ENCODE measurements at regions of chr20 and their contacts with region 1.

Region 1: GRCh38 chr20:9699181-9699580 is 139.7 kb downstream of the PAK5 start:
- DNase-seq: no peak
- H3K4me3 ChIP-seq: no peak overlapping the region
- H3K27ac ChIP-seq: peak overlapping the region in 1 of 2 donors; percentile 14
- H3K4me1 ChIP-seq: no peaks in the 10 kb centered on the region
- H3K27me3 ChIP-seq: no peaks in the 10 kb centered on the region
- CTCF ChIP-seq: no peak
- POLR2A ChIP-seq: no peak

Region 2: GRCh38 chr20:9185511-9185910 is 513.7 kb before region 1 on chr20:
- intact Hi-C with region 1: loop called (anchors 10 kb)
- DNase-seq: no peak
- H3K4me3 ChIP-seq: no peak overlapping the region
- H3K27ac ChIP-seq: no peak overlapping the region
- H3K4me1 ChIP-seq: no peaks in the 10 kb centered on the region
- H3K27me3 ChIP-seq: no peaks in the 10 kb centered on the region
- CTCF ChIP-seq: no peak
- POLR2A ChIP-seq: no peak

Region 3: GRCh38 chr20:9532069-9532838 is 166.9 kb before region 1 on chr20:
- intact Hi-C with region 1: no loop called
- DNase-seq: no peak
- H3K4me3 ChIP-seq: no peak overlapping the region
- H3K27ac ChIP-seq: no peak overlapping the region
- H3K4me1 ChIP-seq: no peaks in the 10 kb centered on the region
- H3K27me3 ChIP-seq: no peaks in the 10 kb centered on the region
- CTCF ChIP-seq: no peak
- POLR2A ChIP-seq: no peak